Dorsolateral prefrontal cortex (tissue), 120 donors: ENCODE measurements at regions of chr7 and their contacts with region 1.

Region 1: DNA sequence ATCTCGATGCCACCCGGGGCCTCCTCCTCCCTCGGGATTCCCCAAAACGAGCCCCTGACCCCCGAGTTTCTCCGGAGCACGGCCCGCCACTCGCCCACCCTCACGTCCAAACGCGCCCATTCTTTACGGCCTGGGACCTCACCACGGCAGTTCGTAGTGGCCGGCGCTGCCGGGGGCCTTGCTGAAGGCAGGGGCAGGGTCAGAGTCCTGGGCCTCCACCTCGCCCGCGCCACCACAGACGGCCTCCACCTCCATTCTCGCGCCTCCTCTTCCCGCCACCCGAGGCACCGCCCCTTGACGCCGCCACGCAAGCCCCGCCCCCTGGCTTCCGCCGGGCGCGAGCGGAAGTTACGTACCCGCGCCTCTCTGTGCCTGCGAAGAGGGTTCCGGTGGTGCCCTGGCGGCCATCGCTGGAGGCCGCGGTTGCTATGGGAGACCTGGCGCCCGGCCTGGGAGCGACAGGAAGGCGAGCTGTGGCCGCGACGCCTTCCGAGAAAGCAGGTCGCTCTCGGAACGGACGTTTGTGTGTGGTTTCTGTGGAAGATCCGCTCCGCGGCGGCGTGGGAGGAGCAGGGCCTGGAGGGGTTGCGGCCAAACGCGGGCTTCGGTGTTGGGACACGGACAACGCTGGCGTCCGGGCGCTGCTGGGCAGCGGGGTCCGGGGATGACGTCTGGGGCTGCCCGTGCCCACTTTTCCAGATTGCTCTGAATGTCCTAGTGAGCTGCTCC is at the start of gene RFC2:
- DNase-seq: peak; percentile 93 to 100 (median 96)
- H3K4me3 ChIP-seq: peak within 1 kb of the TSS; percentile 67 to 99 (median 89)
- H3K27ac ChIP-seq: peak within 1 kb of the TSS; percentile 81 to 99 (median 95)
- H3K27me3 ChIP-seq: no peaks in the 10 kb centered on the region
- CTCF ChIP-seq: peak in 52 of 56 donors; percentile 12 to 72 (median 54)
- total RNA-seq, gene RFC2: 10.9 to 31.7 (median 19.3) TPM

Region 2: GRCh38 chr7:74206589-74207120 is 47.6 kb before region 1 on chr7:
- intact Hi-C with region 1: loop called in 1 of 2 experiments (anchors 5 kb)
- DNase-seq: peak; percentile 80 to 91 (median 86)
- H3K4me3 ChIP-seq: peak overlapping the region in 57 of 59 donors; percentile 14 to 62 (median 37)
- H3K27ac ChIP-seq: peak overlapping the region in 6 of 59 donors; percentile 6 to 76 (median 48)
- H3K27me3 ChIP-seq: no peaks in the 10 kb centered on the region
- CTCF ChIP-seq: peak; percentile 85 to 99 (median 98)